ENCODE measurements at regions of chr12 and their contacts with region 1.

Region 1: GRCh38 chr12:53984901-53985709 is at the start of gene HOXC10:
- DNase-seq: peak; percentile 97
- ATAC-seq: peak; percentile 81 to 85
- H3K4me3 ChIP-seq: peak within 1 kb of the TSS; percentile 68 to 85 (median 82)
- H3K27ac ChIP-seq: peak within 1 kb of the TSS; percentile 94 to 100 (median 98)
- H3K4me1 ChIP-seq: peaks cover 32 to 41% of the 10 kb centered on the region in 2 donors
- H3K27me3 ChIP-seq: peaks cover 0 to 38% (median 0%) of the 10 kb centered on the region in 3 donors
- CTCF ChIP-seq: peak; percentile 64 to 92 (median 82)
- POLR2A ChIP-seq: peak; percentile 45 to 49
- total RNA-seq, gene HOXC10: 23.9 to 48.3 (median 40.3) TPM

Region 2: GRCh38 chr12:53047221-53048042 is 937.7 kb before region 1 on chr12:
- in situ Hi-C with region 1: no loop called
- intact Hi-C with region 1: loop called (anchors 10 kb)
- DNase-seq: peak; percentile 72 to 82
- ATAC-seq: peak; percentile 17 to 20
- H3K4me3 ChIP-seq: peak overlapping the region; percentile 83 to 97 (median 95)
- H3K27ac ChIP-seq: peak overlapping the region; percentile 100
- H3K4me1 ChIP-seq: peaks cover 42 to 63% of the 10 kb centered on the region in 2 donors
- H3K27me3 ChIP-seq: no peaks in the 10 kb centered on the region
- CTCF ChIP-seq: peak in 4 of 5 experiments; percentile 35 to 77 (median 57)
- POLR2A ChIP-seq: peak; percentile 81 to 89

Region 3: DNA sequence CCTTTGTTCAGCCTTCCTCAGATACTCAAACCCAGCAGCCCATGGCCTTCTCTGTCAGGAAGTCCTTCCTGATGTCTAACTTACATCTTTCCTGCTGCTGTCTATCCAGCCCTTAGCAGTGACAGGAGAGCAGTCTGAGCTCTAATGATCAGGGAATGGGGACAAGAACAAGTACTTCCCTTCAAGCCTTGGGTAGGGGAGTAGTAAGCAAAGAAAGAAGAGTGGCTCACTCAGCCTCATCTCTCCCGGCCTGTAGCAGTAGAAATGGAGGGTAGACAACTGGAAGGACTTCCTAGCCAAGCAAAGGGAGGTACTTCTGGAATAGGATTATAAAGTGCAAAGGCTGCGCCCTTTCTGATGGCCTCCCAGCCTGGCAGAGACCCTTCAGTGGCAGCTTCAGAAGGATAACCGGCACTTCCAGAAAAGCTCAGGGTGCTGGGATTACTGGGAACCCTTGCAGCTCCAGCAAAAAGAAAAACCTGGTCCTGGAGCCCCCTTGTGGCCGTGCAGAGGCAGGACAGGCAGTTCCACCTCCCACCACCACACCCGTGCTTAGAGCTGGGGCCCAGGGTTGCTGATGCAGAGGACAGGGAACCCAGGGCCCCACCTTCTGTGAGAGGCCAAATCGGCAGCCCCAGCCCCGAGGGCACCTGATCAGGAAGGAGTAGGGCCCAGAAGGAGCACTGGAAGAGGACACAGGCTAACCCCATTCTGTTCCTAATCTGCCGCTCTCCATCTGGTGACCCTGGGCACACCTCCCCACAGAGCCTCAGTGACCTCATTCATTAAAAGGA is 216.1 kb after region 1 on chr12:
- in situ Hi-C with region 1: loop called (anchors 10 to 25 kb)
- intact Hi-C with region 1: loop called (anchors 1 kb)
- DNase-seq: peak; percentile 55 to 78
- ATAC-seq: peak; percentile 40 to 48
- H3K4me3 ChIP-seq: no peak overlapping the region
- H3K27ac ChIP-seq: no peak overlapping the region
- H3K4me1 ChIP-seq: peaks cover 19 to 24% of the 10 kb centered on the region in 2 donors
- H3K27me3 ChIP-seq: no peaks in the 10 kb centered on the region
- CTCF ChIP-seq: peak; percentile 97 to 100 (median 98)
- POLR2A ChIP-seq: no peak

Region 4: GRCh38 chr12:54214553-54215406 is 229.7 kb after region 1 on chr12:
- in situ Hi-C with region 1: loop called (anchors 10 to 25 kb)
- intact Hi-C with region 1: no loop called
- DNase-seq: peak; percentile 80 to 86
- ATAC-seq: peak; percentile 89 to 94
- H3K4me3 ChIP-seq: peak overlapping the region; percentile 35 to 48 (median 42)
- H3K27ac ChIP-seq: no peak overlapping the region
- H3K4me1 ChIP-seq: peaks cover 15% of the 10 kb centered on the region in 2 donors
- H3K27me3 ChIP-seq: peaks cover 0 to 4% (median 3%) of the 10 kb centered on the region in 3 donors
- CTCF ChIP-seq: peak; percentile 96 to 100 (median 97)
- POLR2A ChIP-seq: no peak

Region 5: GRCh38 chr12:54786081-54786480 is 801.0 kb after region 1 on chr12:
- in situ Hi-C with region 1: no loop called
- intact Hi-C with region 1: no loop called
- DNase-seq: no peak
- ATAC-seq: no peak
- H3K4me3 ChIP-seq: no peak overlapping the region
- H3K27ac ChIP-seq: no peak overlapping the region
- H3K4me1 ChIP-seq: no peaks in the 10 kb centered on the region
- H3K27me3 ChIP-seq: no peaks in the 10 kb centered on the region
- CTCF ChIP-seq: no peak
- POLR2A ChIP-seq: no peak

Region 6: DNA sequence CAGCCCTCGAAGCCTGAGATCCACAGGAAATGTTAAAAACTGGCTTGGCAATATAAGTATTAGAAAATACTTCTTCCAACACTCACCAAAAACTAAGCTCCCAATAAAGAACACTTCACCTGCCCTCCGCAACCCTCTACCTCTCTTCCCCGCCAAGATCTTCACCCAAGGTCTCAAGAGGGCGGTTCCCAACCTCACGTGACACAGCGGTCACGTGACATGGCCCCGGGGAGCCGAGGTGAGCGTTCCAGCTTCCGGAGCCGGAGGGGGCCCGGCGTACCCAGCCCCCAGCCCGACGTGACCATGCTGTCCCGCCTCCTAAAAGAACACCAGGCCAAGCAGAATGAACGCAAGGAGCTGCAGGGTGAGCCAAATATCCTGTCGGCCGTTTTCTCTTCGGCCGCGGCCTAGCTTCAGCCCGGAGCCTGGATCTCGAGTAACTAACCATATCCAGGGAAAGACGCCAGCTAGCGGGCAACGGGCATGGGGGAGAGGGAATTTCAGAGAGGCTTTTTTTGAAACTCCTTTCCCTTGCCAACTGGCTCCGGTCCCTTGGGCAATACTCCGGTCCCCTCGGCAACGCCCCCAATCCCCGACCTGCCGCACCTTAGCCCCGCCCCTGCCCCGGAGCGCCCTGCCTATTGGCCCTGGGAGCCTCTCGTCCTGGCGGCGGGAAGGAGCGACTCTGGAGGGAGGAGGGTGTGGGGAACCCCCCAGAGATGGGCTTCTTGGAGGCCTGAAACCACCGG is 1730.9 kb after region 1 on chr12 and contains the start of gene BLOC1S1:
- in situ Hi-C with region 1: loop called in 1 of 4 experiments (anchors 25 kb)
- intact Hi-C with region 1: loop called (anchors 10 kb)
- DNase-seq: peak; percentile 90 to 96
- ATAC-seq: peak; percentile 56 to 63
- H3K4me3 ChIP-seq: peak within 1 kb of the TSS; percentile 69 to 95 (median 81)
- H3K27ac ChIP-seq: peak within 1 kb of the TSS; percentile 95 to 100 (median 99)
- H3K4me1 ChIP-seq: peaks cover 80 to 85% of the 10 kb centered on the region in 2 donors
- H3K27me3 ChIP-seq: no peaks in the 10 kb centered on the region
- CTCF ChIP-seq: peak in 4 of 5 experiments; percentile 13 to 58 (median 38)
- POLR2A ChIP-seq: peak; percentile 54 to 56
- total RNA-seq, gene BLOC1S1: 255 to 434 (median 300) TPM